ENCODE measurements at regions of chr9 and their contacts with region 1.

Region 1: DNA sequence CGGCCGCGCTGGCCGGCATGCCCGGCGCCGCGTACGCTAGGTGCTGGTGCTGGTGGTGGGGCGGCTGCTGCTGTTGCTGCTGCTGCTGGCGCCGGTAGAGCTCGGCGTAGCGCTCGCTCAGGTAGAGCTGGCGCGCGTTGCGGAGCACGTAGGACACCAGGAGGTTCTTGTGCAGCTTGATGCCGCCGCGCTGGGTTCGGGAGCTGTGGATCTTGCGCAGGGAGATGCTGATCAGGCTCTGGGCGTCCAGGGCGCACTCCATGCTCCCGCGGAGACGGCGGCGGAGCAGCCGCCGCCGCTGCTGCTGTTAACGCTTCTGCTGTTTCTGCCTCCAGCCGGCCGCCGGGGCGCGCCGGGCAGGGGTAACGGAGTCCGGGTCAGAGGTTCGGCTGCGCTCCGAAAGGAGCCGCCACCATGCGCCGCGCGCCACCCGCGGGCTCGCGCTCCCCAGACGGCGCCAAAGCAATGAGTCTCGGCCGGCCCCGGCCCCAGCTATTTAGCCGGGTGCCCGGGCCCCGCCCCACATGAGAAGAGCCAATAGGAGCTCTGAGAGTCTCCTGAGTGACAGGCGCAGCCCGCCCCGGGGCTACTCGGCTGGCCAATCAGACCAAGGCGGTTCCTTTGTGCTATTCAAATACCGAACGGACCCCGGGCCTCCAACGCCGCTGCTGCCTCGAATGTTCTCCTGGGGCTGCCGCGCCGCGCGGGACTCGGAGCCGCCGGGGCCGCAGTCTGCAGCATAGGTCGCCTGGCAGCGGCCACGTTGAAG is at the start of gene IER5L:
- DNase-seq: peak; percentile 87 to 98
- H3K4me3 ChIP-seq: peak within 1 kb of the TSS; percentile 95
- H3K27ac ChIP-seq: peak within 1 kb of the TSS; percentile 45; the same call in 1 of the 2 replicates
- H3K4me1 ChIP-seq: peaks cover 18% of the 10 kb centered on the region
- H3K27me3 ChIP-seq: no peaks in the 10 kb centered on the region
- CTCF ChIP-seq: no peak
- total RNA-seq, gene IER5L: 35.5 and 37.3 TPM in 2 replicates

Region 2: GRCh38 chr9:129225815-129226214 is 47.8 kb after region 1 on chr9:
- CTCF ChIA-PET with region 1: interaction called, 7 read pairs
- POLR2A ChIA-PET with region 1: no interaction called
- intact Hi-C with region 1: loop called (anchors 2 kb)
- DNase-seq: peak; percentile 68 to 85
- H3K4me3 ChIP-seq: no peak overlapping the region
- H3K27ac ChIP-seq: peak overlapping the region; percentile 49
- H3K4me1 ChIP-seq: peaks cover 31% of the 10 kb centered on the region
- H3K27me3 ChIP-seq: no peaks in the 10 kb centered on the region
- CTCF ChIP-seq: no peak

Region 3: DNA sequence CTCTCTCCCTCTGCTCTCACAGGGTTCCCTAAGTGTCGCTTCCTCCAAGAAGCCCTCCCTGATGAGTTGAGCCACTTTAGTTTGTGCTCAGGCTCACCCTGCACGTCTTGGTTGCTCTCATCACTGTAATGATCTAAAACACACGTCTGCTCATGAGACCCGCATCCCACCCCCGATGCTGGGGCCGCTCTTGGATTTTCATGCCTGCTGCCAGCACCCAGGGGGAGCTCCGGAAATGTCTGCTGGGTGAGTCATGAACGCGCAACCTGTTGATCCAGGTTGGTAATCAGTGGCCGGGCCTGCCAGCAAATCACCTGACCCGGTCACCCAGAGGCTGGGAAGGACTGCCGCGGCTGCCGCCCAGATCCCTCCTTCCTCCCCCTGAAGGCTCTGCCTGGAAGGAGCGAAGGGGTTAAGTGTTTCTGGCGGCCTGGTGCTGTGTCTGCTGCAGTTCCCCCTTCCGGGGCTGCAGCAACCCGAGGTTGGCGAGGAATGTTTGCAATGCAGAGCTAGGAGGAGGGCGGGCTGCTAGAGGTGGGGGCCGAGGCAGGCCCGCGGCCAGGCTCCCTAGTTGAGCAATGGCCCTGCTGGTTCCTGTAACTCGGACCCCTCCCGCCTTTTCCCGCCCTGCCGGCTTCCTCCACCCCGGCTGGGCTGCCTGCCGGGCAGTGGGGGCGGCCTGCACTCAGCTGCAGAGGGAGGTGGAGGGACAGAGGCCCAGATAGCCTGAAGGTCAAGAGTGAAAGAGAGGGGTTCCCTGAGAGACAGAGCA is 156.2 kb after region 1 on chr9:
- CTCF ChIA-PET with region 1: interaction called, 3 read pairs
- POLR2A ChIA-PET with region 1: interaction called, 17 read pairs
- intact Hi-C with region 1: loop called (anchors 1 kb)
- DNase-seq: peak; percentile 98 to 99
- H3K4me3 ChIP-seq: peak overlapping the region; percentile 43; the same call in 1 of the 2 replicates
- H3K27ac ChIP-seq: peak overlapping the region; percentile 94
- H3K4me1 ChIP-seq: peaks cover 45% of the 10 kb centered on the region
- H3K27me3 ChIP-seq: no peaks in the 10 kb centered on the region
- CTCF ChIP-seq: no peak; the same call in 1 of the 2 replicates

Region 4: GRCh38 chr9:129413537-129414376 is 235.8 kb after region 1 on chr9:
- CTCF ChIA-PET with region 1: no interaction called
- POLR2A ChIA-PET with region 1: interaction called, 20 read pairs
- intact Hi-C with region 1: loop called (anchors 5 kb)
- DNase-seq: peak; percentile 87 to 99
- H3K4me3 ChIP-seq: peak overlapping the region; percentile 77
- H3K27ac ChIP-seq: peak overlapping the region; percentile 85
- H3K4me1 ChIP-seq: peaks cover 24% of the 10 kb centered on the region
- H3K27me3 ChIP-seq: no peaks in the 10 kb centered on the region
- CTCF ChIP-seq: no peak

Region 5: DNA sequence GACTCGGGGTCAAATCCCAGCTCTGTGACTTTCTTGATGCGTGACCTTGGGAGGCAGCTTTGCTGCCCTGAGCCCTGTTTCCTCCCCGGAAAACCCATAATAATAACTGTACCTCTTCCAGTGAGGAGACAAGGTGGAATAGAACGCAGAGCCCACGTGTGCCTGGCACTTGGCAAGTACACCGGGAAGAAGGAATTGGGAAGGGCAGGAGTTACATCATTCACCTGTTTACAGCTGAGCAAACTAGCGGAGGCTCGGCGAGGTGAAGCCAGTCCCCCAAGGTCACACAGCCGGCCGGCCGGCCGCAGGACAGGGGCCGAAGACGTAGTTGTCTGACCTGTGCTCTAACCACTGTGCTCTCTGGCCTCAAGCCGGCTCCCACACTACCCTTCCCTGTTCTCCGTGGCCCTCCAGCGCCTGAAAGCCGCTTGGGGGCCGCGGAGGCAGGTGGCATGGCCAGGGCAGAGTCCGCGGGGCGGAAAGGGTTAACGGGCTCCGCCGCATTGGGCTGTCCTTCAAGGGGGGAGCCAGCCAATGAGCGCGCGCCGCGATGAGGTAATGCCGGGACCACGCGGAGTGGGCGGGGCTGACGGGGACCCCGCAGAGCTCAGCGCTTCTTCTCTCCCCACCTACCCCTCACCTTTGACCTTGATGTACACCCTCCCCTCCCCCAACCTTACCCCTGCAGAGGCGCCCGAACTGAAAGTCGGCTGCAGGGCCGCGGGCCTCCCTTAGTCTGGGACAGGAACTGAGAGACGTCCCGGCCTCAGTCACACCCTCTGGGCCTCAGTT is 317.8 kb after region 1 on chr9:
- CTCF ChIA-PET with region 1: interaction called, 4 read pairs
- POLR2A ChIA-PET with region 1: interaction called, 19 read pairs
- intact Hi-C with region 1: no loop called
- DNase-seq: peak; percentile 78 to 95
- H3K4me3 ChIP-seq: peak overlapping the region; percentile 60
- H3K27ac ChIP-seq: peak overlapping the region; percentile 64
- H3K4me1 ChIP-seq: peaks cover 52% of the 10 kb centered on the region
- H3K27me3 ChIP-seq: no peaks in the 10 kb centered on the region
- CTCF ChIP-seq: no peak

Region 6: DNA sequence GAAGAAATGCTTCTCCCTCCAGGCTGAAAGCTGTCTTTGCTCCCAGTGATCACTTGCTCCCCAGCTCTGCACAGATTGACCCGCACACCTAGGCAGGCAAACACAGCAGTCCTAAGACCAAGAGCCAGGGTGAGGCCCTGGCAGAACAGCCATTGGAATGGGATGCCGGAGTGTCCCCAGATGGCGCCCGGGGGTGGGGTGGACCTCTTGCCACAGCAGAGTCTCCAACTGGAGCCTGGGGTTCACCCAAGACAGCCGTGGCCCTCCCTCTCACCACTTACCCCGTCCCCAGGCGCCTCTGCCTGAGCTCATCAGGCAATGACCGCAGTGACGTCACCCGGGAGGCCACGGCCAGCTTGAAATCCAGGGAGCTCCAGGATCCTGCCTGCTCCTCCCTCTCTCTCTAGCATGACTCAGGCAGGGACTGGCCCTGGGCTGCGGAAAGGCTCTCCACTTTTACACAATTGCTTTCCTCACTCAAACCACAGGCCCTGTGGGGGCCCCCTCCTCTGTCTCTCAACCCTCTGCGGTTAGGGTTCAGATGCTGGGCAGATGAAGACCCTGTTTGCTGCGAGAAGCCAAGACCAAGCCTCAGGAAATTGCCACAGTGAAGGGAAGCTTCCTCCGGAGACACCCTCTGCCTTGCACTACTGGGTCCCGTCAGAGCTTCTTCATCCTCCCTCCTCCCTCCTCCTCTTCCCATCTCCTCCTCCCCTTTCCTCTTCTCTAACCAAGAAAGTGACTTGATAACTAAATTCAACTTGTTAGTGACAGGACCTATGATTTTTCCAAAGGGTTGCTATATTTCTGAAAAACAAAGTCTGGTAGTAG is 599.2 kb after region 1 on chr9:
- CTCF ChIA-PET with region 1: no interaction called
- POLR2A ChIA-PET with region 1: interaction called, 13 read pairs
- intact Hi-C with region 1: no loop called
- DNase-seq: peak; percentile 96 to 98
- H3K4me3 ChIP-seq: peak overlapping the region; percentile 23; the same call in 1 of the 2 replicates
- H3K27ac ChIP-seq: peak overlapping the region; percentile 71
- H3K4me1 ChIP-seq: peaks cover 84% of the 10 kb centered on the region
- H3K27me3 ChIP-seq: no peaks in the 10 kb centered on the region
- CTCF ChIP-seq: no peak